Psoas muscle (tissue), 8 donors: ENCODE measurements at regions of chr1 and their contacts with region 1.

Region 1: DNA sequence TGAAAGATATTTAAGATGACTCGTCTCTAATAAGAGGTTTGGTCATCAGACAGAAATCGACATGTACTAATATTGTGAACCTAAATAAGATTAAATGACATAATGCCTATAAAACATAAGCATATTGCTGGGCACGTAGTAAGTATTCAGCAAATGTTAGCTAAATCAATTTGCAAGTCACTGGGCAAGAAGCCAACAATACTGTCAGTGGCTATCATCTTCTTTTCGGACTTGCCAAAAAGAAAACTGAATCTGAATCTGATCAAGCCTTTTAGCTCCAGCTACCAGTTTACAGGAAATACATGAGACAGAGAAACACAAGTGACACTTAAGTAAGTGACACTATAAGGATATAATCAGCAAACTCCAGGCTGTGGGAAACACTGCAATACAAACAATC is 46.0 kb downstream of the RPL5 start:
- DNase-seq: no peak
- ATAC-seq: peak in 1 of 4 donors; percentile 50
- H3K4me3 ChIP-seq: no peak overlapping the region
- H3K27ac ChIP-seq: peak overlapping the region; percentile 19
- H3K4me1 ChIP-seq: no peaks in the 10 kb centered on the region
- H3K27me3 ChIP-seq: no peaks in the 10 kb centered on the region
- CTCF ChIP-seq: no peak

Region 2: DNA sequence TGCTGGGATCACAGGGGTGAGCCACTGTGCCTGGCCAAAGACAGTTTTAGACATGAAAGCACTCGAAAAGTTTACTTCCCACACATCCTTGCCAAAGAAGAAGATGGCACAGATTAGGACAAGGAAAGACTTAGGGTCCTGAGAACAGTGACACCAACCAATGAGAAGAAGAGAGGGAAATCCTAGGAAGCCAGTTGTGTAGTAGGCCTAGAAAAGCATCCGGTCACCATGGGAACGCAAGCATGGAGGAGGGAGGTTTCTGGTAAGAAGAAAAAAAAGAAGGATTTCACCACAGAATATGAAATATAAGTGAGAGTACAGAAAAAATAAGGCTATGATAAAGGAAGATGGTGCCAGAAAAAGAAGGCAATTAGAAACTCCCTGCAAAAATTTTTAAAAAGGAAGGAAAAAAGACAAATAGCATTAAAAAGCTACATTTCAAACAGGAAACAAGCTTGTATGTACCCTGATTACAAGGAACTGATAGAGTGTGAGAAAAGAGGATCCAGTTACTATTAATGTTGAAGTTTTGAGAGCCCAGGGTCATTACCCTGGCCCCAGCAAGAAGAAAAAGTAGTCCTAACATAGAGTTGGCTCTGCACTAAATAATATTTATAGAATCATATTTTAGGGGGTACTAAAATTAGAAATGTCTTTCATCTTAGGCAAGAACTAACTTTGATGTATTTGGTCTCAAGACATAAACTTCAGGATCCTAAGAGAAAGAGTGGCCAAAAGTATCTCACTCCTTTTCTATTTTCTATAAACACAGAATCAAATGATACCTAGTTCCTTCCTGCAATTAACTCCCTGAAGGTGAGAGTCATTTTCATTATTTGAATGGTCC is 67.3 kb after region 1 on chr1:
- intact Hi-C with region 1: loop called in 1 of 2 experiments (anchors 5 kb)
- DNase-seq: no peak
- ATAC-seq: peak in 1 of 4 donors; percentile 35
- H3K4me3 ChIP-seq: no peak overlapping the region
- H3K27ac ChIP-seq: peak overlapping the region; percentile 12
- H3K4me1 ChIP-seq: peaks cover 45% of the 10 kb centered on the region
- H3K27me3 ChIP-seq: no peaks in the 10 kb centered on the region
- CTCF ChIP-seq: no peak

Region 3: GRCh38 chr1:93015590-93015989 is 137.8 kb after region 1 on chr1:
- intact Hi-C with region 1: no loop called
- DNase-seq: no peak
- ATAC-seq: peak; percentile 64 to 89 (median 78)
- H3K4me3 ChIP-seq: peak overlapping the region; percentile 44
- H3K27ac ChIP-seq: peak overlapping the region; percentile 79
- H3K4me1 ChIP-seq: peaks cover 43% of the 10 kb centered on the region
- H3K27me3 ChIP-seq: no peaks in the 10 kb centered on the region
- CTCF ChIP-seq: no peak